ENCODE measurements at regions of chrX and their contacts with region 1.

Region 1: DNA sequence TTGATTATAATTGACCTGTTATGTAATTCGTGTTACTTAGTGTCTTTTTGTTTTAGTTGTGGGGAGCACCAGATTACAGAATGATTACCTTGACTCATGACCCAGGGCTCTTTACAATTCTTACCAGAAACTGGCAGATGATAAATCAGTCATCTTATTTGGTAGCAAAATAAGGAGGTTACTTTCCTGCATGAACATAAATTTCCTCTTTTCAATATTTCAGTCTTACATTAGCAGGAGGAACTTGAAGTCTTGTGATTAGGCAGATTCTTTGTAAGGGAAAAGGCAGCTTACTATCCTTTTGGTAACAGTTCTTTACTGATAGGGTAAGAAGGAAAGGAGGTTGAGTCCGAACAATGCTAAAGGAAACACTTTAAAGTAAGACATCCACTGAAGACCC is 26.0 kb upstream of the SLC25A5 start:
- DNase-seq: no peak
- ATAC-seq: no peak
- H3K4me3 ChIP-seq: no peak overlapping the region
- H3K27ac ChIP-seq: no peak overlapping the region
- H3K4me1 ChIP-seq: no peaks in the 10 kb centered on the region
- H3K27me3 ChIP-seq: no peaks in the 10 kb centered on the region
- CTCF ChIP-seq: no peak

Region 2: DNA sequence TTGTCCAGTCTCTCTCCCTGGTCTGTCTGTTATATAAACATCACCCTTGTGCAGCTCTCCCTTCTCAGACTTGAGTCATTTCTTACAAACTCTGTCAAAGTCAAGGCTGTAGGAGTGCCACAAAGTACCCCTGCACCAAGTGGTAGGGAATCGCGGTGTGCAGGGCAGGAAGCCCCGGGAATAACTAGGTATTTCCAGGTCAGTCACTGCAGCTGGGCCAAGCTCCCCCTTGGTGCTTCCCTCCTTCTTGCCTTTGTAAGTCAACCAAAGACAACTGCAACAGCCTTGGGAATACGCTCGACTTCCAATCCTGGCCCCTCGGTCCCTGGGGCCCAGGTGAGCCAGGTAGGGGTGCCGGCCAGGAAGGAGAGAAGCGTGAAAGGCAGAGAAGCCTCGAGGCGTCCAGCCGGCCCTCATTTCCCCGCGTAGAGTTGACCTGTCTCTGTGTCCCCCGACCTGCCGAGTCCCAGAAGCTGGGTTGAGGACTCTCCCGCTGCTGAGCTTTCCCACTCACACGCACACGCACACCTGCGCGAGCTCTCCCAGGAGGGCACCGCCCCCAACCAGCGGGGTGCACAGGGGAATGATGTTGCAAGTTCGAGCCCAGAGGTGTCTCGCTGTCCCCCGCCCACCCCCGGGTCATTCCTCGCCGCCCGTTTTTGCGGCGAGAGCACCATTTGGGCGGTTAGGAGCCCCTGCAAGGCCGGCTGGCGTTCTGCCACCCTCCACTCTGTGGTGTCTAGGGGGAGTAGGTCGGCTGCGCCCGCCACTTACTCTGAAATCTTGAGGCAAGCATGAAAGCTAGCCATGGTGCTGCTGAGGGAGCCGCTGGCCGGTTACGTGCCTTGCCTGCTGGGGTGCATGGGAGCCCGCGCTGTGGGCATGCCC is 291.9 kb before region 1 on chrX:
- CTCF ChIA-PET with region 1: no interaction called
- POLR2A ChIA-PET with region 1: interaction called, 10 read pairs
- in situ Hi-C with region 1: no loop called
- intact Hi-C with region 1: no loop called
- DNase-seq: no peak
- ATAC-seq: no peak
- H3K4me3 ChIP-seq: no peak overlapping the region
- H3K27ac ChIP-seq: no peak overlapping the region
- H3K4me1 ChIP-seq: no peaks in the 10 kb centered on the region
- H3K27me3 ChIP-seq: peaks cover 4% of the 10 kb centered on the region
- CTCF ChIP-seq: no peak

Region 3: DNA sequence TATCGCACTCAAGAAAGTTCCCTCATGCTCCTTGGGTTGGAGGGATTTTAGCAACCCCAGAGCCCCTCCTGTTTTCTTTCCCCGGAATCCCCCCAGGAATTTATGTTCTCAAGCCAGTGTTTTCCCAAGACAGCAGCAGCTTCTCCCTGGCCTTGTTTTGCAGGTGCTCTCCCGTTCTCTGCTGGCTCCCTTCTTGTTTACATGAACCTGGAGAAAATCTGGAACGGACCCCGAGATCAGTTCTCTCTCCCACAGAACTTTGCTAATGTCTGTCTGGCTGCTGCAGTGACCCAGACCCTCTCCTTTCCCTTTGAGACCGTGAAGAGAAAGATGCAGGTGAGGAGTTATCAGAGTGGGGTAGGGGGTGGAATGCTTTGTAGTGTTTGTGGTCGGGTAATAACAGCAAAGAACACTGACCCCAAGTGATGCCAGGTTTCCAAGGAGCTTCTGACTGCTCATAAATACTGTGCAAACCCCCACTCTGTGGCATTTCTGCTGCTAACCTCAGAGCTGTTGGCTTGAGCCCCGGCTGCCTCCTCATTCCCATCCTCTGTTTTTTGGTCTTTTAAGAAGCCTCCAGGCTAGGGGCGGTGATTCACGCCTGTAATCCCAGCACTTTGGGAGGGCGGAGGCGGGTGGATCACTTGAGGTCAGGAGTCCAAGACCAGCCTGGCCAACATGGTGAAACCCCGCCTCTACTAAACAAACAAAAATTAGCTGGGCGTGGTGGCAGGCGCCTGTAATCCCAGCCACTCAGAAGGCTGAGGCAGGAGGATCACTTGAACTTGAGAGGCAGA is 32.1 kb before region 1 on chrX:
- CTCF ChIA-PET with region 1: no interaction called
- POLR2A ChIA-PET with region 1: no interaction called
- in situ Hi-C with region 1: no loop called
- intact Hi-C with region 1: no loop called
- DNase-seq: no peak
- ATAC-seq: no peak; the same call in 1 of the 2 replicates
- H3K4me3 ChIP-seq: 0 out of 4 replicates have a peak overlapping the region, but pooled peaks of 1 of the 2 experiments have one; percentile 6
- H3K27ac ChIP-seq: no peak overlapping the region
- H3K4me1 ChIP-seq: no peaks in the 10 kb centered on the region
- H3K27me3 ChIP-seq: no peaks in the 10 kb centered on the region
- CTCF ChIP-seq: no peak